Astrocyte of the cerebellum (primary cell): ENCODE measurements at regions of chr1 and their contacts with region 1.

Region 1: DNA sequence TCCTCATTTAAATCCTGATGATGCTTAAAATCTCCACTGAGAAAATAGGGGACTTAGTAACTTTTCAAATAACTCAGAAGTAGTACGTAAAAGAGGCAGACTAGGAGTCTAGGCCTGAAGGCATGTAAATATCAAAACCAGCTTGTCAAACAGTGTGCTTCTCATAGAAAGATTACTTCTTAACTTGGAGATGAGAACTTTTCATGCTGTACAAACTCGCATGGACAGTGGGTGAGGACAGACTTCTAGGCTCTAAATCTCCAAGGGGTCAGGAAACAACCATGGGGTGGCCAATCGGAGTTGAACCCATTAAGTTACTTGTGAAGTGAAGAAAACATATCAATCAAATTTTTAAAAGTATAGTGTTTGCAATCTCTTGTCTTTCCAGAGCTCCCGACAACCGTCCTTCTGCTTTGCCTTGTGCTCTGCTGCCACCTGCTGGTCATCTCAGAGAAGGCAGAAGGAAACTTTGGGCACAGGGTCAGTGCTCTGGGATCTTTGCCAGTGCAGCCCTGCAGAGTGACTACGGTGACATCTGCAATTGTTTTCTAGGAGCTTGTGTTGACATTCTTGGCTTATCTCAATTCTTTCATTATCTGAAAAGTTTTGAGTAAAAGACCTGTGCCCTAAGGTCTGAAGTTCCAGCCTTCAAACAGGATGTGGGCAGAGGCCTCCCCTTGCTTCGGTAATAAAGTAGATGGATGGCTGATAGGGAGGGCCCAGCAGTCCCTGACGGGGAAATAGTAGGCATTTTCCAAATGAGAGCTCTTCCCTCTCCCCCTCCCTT is 105.1 kb upstream of the PDE4B start:
- DNase-seq: peak; percentile 51
- H3K4me3 ChIP-seq: no peak overlapping the region
- CTCF ChIP-seq: peak; percentile 78

Region 2: GRCh38 chr1:65209005-65209885 is 478.4 kb before region 1 on chr1:
- in situ Hi-C with region 1: loop called (anchors 25 kb)
- DNase-seq: peak; percentile 31
- H3K4me3 ChIP-seq: no peak overlapping the region
- CTCF ChIP-seq: peak; percentile 63

Region 3: GRCh38 chr1:65791396-65791795 is 103.8 kb after region 1 on chr1:
- in situ Hi-C with region 1: no loop called
- DNase-seq: no peak
- H3K4me3 ChIP-seq: no peak overlapping the region
- CTCF ChIP-seq: no peak